CD14-positive monocyte (primary cell): ENCODE measurements at regions of chr11 and their contacts with region 1.

Region 1: GRCh38 chr11:65516135-65516935 is 8.5 kb upstream of the SCYL1 start:
- DNase-seq: no peak
- H3K4me3 ChIP-seq: no peak overlapping the region
- H3K4me3 Mint-ChIP-seq: no peak overlapping the region
- H3K27ac ChIP-seq: no peak overlapping the region
- H3K27ac Mint-ChIP-seq: peak overlapping the region in 2 of 7 donors; percentile 5 to 25
- H3K4me1 ChIP-seq: no peaks in the 10 kb centered on the region
- H3K4me1 Mint-ChIP-seq: peaks cover 4% of the 10 kb centered on the region
- H3K27me3 ChIP-seq: no peaks in the 10 kb centered on the region
- H3K27me3 Mint-ChIP-seq: peaks cover 2 to 11% (median 7%) of the 10 kb centered on the region in 3 donors
- CTCF ChIP-seq: no peak

Region 2: DNA sequence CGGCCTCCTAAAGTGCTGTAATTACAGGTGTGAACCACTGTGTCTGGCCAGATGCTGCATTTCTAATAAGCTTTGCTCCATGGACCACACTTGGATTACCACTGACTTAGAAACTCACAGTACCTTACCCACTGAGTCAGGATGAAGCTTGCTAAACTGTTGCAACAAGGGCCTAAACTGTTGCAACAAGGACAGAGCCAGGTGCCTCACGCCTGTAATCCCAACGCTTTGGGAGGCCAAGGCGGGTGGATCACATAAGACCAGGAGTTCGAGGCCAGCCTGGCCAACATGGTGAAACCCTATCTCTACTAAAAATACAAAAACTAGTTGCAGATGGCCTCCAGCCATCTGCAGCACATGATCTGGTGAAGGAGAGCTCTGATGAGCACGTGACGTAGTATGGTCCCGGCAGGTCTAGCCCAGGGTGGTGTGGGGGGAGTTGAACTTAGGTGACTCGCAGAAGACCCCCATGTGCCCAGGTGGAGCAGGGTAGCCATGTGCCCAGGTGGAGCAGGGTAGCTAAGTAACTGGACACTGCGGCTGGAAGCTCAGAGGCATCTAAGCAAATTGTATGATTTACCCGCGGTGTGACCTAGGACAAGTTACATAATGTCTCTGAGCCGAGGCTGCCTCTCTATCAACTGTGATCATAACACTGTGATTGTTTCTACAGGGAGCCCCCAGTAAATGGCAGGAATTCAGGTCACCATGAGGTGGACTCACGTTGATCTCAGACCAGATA is 142.3 kb before region 1 on chr11:
- intact Hi-C with region 1: loop called (anchors 5 kb)
- DNase-seq: no peak
- H3K4me3 ChIP-seq: no peak overlapping the region
- H3K4me3 Mint-ChIP-seq: no peak overlapping the region
- H3K27ac ChIP-seq: no peak overlapping the region
- H3K27ac Mint-ChIP-seq: no peak overlapping the region
- H3K4me1 ChIP-seq: peaks cover 15 to 28% of the 10 kb centered on the region in 2 donors
- H3K4me1 Mint-ChIP-seq: peaks cover 28% of the 10 kb centered on the region
- H3K27me3 ChIP-seq: no peaks in the 10 kb centered on the region
- H3K27me3 Mint-ChIP-seq: peaks cover 4 to 5% (median 4%) of the 10 kb centered on the region in 3 donors
- CTCF ChIP-seq: no peak

Region 3: GRCh38 chr11:65551572-65552398 is 35.5 kb after region 1 on chr11:
- intact Hi-C with region 1: no loop called
- DNase-seq: peak in 2 of 3 donors; percentile 53 to 57
- H3K4me3 ChIP-seq: no peak overlapping the region
- H3K4me3 Mint-ChIP-seq: no peak overlapping the region
- H3K27ac ChIP-seq: no peak overlapping the region
- H3K27ac Mint-ChIP-seq: no peak overlapping the region
- H3K4me1 ChIP-seq: peaks cover 24 to 42% of the 10 kb centered on the region in 2 donors
- H3K4me1 Mint-ChIP-seq: peaks cover 55% of the 10 kb centered on the region
- H3K27me3 ChIP-seq: peaks cover 0 to 2% of the 10 kb centered on the region in 2 donors
- H3K27me3 Mint-ChIP-seq: peaks cover 15 to 23% (median 16%) of the 10 kb centered on the region in 3 donors
- CTCF ChIP-seq: peak; percentile 71

Region 4: GRCh38 chr11:65595543-65596281 is 79.4 kb after region 1 on chr11 and contains the start of gene KCNK7:
- intact Hi-C with region 1: no loop called
- DNase-seq: no peak
- H3K4me3 ChIP-seq: no peak within 1 kb of the TSS
- H3K4me3 Mint-ChIP-seq: no peak within 1 kb of the TSS
- H3K27ac ChIP-seq: peak within 1 kb of the TSS; percentile 46 to 53
- H3K27ac Mint-ChIP-seq: peak within 1 kb of the TSS; percentile 45 to 87 (median 75)
- H3K4me1 ChIP-seq: peaks cover 16 to 29% of the 10 kb centered on the region in 2 donors
- H3K4me1 Mint-ChIP-seq: peaks cover 31% of the 10 kb centered on the region
- H3K27me3 ChIP-seq: no peaks in the 10 kb centered on the region
- H3K27me3 Mint-ChIP-seq: no peaks in the 10 kb centered on the region
- CTCF ChIP-seq: no peak
- polyA plus RNA-seq, gene KCNK7: 4.3 TPM in 1 of 3 donors, not detected in the others